CD8-positive, alpha-beta T cell (primary cell): ENCODE measurements at regions of chr14 and their contacts with region 1.

Region 1: DNA sequence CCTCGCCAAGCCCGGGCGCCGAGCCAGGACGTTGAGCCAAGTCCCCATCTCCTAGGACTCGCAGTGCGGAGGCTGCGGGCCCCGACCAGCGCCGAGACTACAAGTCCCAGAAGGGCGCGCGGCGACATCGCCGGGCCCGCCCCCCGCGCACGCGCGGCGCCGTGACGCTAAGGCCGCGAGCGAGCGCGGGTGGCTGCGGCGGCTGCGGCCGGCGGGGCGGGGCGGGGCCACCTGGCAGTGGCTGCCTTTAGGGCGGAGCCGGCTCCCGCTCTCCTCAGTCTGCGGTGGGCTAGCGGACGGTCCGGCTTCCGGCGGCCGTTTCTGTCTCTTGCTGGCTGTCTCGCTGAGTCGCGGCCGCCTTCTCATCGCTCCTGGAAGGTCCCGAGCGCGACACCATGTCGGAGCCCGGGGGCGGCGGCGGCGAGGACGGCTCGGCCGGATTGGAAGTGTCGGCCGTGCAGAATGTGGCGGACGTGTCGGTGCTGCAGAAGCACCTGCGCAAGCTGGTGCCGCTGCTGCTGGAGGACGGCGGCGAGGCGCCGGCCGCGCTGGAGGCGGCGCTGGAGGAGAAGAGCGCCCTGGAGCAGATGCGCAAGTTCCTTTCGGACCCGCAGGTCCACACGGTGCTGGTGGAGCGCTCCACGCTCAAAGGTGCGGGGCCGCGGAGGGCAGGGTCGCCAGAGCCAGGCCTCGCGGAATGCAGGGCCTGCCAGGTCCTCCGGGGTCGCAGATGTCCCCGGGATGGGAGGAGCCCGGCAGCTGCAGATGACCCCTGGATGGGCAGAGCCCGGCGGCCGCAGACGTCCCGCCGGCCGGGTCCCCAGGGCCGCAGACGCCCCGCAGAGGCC is at the start of gene DYNC1H1:
- DNase-seq: peak; percentile 75 to 94 (median 87)
- ATAC-seq: peak; percentile 84
- H3K4me3 ChIP-seq: peak within 1 kb of the TSS; percentile 87 to 92
- H3K4me3 Mint-ChIP-seq: peak within 1 kb of the TSS; percentile 90
- H3K27ac ChIP-seq: peak within 1 kb of the TSS; percentile 74 to 88
- H3K27ac Mint-ChIP-seq: peak within 1 kb of the TSS; percentile 91
- H3K4me1 ChIP-seq: peaks cover 31% of the 10 kb centered on the region
- H3K4me1 Mint-ChIP-seq: peaks cover 45% of the 10 kb centered on the region
- H3K27me3 ChIP-seq: no peaks in the 10 kb centered on the region
- H3K27me3 Mint-ChIP-seq: no peaks in the 10 kb centered on the region
- CTCF ChIP-seq: no peak
- total RNA-seq, gene DYNC1H1: 359 TPM

Region 2: GRCh38 chr14:101731187-101732080 is 233.1 kb before region 1 on chr14:
- CTCF ChIA-PET with region 1: no interaction called
- POLR2A ChIA-PET with region 1: no interaction called
- intact Hi-C with region 1: no loop called
- DNase-seq: peak; percentile 50 to 96 (median 80)
- ATAC-seq: peak; percentile 87
- H3K4me3 ChIP-seq: peak overlapping the region; percentile 24 to 28
- H3K4me3 Mint-ChIP-seq: peak overlapping the region; percentile 76
- H3K27ac ChIP-seq: peak overlapping the region; percentile 76 to 83
- H3K27ac Mint-ChIP-seq: peak overlapping the region; percentile 97
- H3K4me1 ChIP-seq: peaks cover 23% of the 10 kb centered on the region
- H3K4me1 Mint-ChIP-seq: peaks cover 44% of the 10 kb centered on the region
- H3K27me3 ChIP-seq: no peaks in the 10 kb centered on the region
- H3K27me3 Mint-ChIP-seq: no peaks in the 10 kb centered on the region
- CTCF ChIP-seq: no peak

Region 3: GRCh38 chr14:101761032-101761880 is 203.3 kb before region 1 on chr14 and contains the start of gene PPP2R5C:
- CTCF ChIA-PET with region 1: interaction called, 3 read pairs
- POLR2A ChIA-PET with region 1: interaction called, 3 read pairs
- intact Hi-C with region 1: loop called (anchors 1 to 5 kb)
- DNase-seq: peak; percentile 74 to 94 (median 87)
- ATAC-seq: peak; percentile 61
- H3K4me3 ChIP-seq: peak within 1 kb of the TSS; percentile 97 to 98
- H3K4me3 Mint-ChIP-seq: peak within 1 kb of the TSS; percentile 95
- H3K27ac ChIP-seq: peak within 1 kb of the TSS; percentile 90 to 93
- H3K27ac Mint-ChIP-seq: peak within 1 kb of the TSS; percentile 94
- H3K4me1 ChIP-seq: peaks cover 25% of the 10 kb centered on the region
- H3K4me1 Mint-ChIP-seq: peaks cover 41% of the 10 kb centered on the region
- H3K27me3 ChIP-seq: no peaks in the 10 kb centered on the region
- H3K27me3 Mint-ChIP-seq: no peaks in the 10 kb centered on the region
- CTCF ChIP-seq: no peak
- total RNA-seq, gene PPP2R5C: 557 to 560 TPM

Region 4: DNA sequence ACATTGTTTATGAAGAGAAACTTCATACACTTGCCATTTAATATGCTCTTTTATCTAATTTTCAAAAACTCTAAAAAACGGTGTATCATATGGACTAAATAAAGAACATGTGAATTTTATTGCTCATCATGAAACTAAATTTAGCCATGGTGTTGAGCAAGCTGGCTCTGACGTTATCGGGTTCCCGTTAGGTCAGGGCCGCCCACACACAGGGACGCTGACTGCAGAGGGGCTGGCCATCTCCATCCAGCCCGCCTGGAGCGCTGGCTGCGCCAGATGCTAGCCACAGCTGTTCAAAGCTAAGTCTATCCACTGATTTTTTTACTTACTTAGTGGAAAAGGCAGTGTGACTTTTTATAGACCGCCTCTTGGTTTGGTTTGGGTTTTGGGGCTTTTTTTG is 36.7 kb before region 1 on chr14:
- CTCF ChIA-PET with region 1: no interaction called
- POLR2A ChIA-PET with region 1: no interaction called
- intact Hi-C with region 1: no loop called
- DNase-seq: no peak
- ATAC-seq: no peak
- H3K4me3 ChIP-seq: no peak overlapping the region
- H3K4me3 Mint-ChIP-seq: no peak overlapping the region
- H3K27ac ChIP-seq: no peak overlapping the region
- H3K27ac Mint-ChIP-seq: no peak overlapping the region
- H3K4me1 ChIP-seq: no peaks in the 10 kb centered on the region
- H3K4me1 Mint-ChIP-seq: no peaks in the 10 kb centered on the region
- H3K27me3 ChIP-seq: no peaks in the 10 kb centered on the region
- H3K27me3 Mint-ChIP-seq: no peaks in the 10 kb centered on the region
- CTCF ChIP-seq: no peak

Region 5: DNA sequence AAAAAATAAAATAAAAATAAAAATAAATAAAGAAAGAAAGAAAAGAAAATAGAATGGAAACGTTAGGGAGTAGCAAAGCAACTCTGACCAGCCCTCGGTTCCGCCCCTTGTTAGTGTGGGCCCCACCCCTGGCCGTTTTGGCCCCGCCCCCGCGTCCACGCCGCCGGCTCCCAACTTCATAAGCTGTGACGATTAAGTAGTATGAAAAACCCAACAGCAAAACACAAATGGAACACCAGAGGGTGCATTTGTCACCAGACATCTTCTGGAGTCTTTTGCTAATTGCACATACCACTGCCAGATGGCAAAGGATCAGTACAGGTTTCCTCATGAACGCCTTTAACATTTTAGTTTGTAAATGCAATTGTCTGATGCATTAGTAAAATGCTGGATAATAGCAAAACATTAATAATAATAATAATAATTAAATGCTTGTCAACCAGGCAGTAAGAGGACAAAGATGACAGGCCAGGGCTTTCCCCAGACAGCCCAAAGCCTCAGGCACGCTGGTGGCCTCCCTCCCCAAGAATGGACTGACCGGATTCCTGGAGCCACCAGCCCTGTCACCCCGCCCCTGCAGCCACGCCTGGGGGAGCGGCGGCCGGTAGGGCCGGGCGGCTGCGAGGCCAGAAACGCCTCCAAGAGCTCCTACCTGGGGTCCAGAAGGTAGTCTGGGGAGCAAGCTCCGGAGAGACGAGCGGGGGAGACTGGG is 98.7 kb after region 1 on chr14:
- CTCF ChIA-PET with region 1: no interaction called
- POLR2A ChIA-PET with region 1: no interaction called
- intact Hi-C with region 1: loop called in 1 of 2 experiments (anchors 1 kb)
- DNase-seq: peak; percentile 45 to 86 (median 66)
- ATAC-seq: peak; percentile 95
- H3K4me3 ChIP-seq: no peak overlapping the region
- H3K4me3 Mint-ChIP-seq: no peak overlapping the region
- H3K27ac ChIP-seq: no peak overlapping the region
- H3K27ac Mint-ChIP-seq: no peak overlapping the region
- H3K4me1 ChIP-seq: no peaks in the 10 kb centered on the region
- H3K4me1 Mint-ChIP-seq: peaks cover 12% of the 10 kb centered on the region
- H3K27me3 ChIP-seq: no peaks in the 10 kb centered on the region
- H3K27me3 Mint-ChIP-seq: no peaks in the 10 kb centered on the region
- CTCF ChIP-seq: peak; percentile 32

Region 6: DNA sequence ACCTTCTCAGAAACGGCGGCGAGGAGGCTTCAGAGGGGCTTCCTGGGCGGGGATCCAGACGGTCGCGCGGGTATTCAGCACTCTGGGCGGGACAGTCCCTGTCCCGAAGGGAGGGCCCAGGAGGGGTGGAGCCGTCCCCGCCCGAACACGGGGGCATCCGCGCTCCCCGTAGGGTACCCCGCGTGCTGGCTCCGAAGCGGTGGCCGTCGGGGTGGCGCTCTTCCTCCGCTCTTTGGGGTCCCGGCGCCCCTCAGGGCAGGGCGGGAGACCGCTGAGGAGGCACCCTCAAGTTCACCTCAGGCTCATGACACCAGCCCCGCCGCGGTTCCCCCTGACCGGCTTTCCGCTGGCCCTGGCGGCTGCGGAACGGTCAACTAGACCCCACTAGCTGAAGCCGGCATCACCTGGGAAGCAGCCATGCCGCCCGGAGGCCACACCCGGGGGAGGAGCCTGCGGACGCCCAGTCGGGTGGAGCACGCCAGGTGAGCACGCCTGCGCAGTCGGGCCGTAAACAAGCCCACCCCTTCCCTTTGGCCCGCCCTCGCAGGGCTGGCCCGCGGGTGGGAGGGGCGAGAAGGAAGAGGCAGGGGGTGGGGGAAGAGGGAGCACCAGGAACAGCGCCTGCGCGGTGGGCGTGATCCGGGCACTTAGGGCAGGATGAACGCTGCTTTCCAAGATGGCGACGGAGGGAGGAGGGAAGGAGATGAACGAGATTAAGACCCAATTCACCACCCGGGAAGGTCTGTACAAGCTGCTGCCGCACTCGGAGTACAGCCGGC is 174.9 kb after region 1 on chr14 and contains the start of gene WDR20:
- CTCF ChIA-PET with region 1: no interaction called
- POLR2A ChIA-PET with region 1: no interaction called
- intact Hi-C with region 1: loop called (anchors 1 kb)
- DNase-seq: peak; percentile 98 to 100 (median 99)
- ATAC-seq: peak; percentile 96
- H3K4me3 ChIP-seq: peak within 1 kb of the TSS; percentile 94 to 95
- H3K4me3 Mint-ChIP-seq: peak within 1 kb of the TSS; percentile 99
- H3K27ac ChIP-seq: peak within 1 kb of the TSS; percentile 87 to 91
- H3K27ac Mint-ChIP-seq: peak within 1 kb of the TSS; percentile 98
- H3K4me1 ChIP-seq: peaks cover 25% of the 10 kb centered on the region
- H3K4me1 Mint-ChIP-seq: peaks cover 29% of the 10 kb centered on the region
- H3K27me3 ChIP-seq: no peaks in the 10 kb centered on the region
- H3K27me3 Mint-ChIP-seq: no peaks in the 10 kb centered on the region
- CTCF ChIP-seq: no peak
- total RNA-seq, gene WDR20: 40.8 to 46.3 TPM

Region 7: GRCh38 chr14:102323102-102323501 is 358.6 kb after region 1 on chr14:
- CTCF ChIA-PET with region 1: no interaction called
- POLR2A ChIA-PET with region 1: interaction called, 4 read pairs
- intact Hi-C with region 1: loop called in 1 of 2 experiments (anchors 1 kb)
- DNase-seq: peak in 3 of 9 experiments; percentile 22 to 61 (median 49)
- ATAC-seq: no peak
- H3K4me3 ChIP-seq: no peak overlapping the region
- H3K4me3 Mint-ChIP-seq: no peak overlapping the region
- H3K27ac ChIP-seq: no peak overlapping the region
- H3K27ac Mint-ChIP-seq: peak overlapping the region; percentile 35
- H3K4me1 ChIP-seq: peaks cover 19% of the 10 kb centered on the region
- H3K4me1 Mint-ChIP-seq: peaks cover 38% of the 10 kb centered on the region
- H3K27me3 ChIP-seq: no peaks in the 10 kb centered on the region
- H3K27me3 Mint-ChIP-seq: no peaks in the 10 kb centered on the region
- CTCF ChIP-seq: no peak

Region 8: GRCh38 chr14:102516531-102517415 is 552.3 kb after region 1 on chr14:
- CTCF ChIA-PET with region 1: no interaction called
- POLR2A ChIA-PET with region 1: no interaction called
- intact Hi-C with region 1: loop called in 1 of 2 experiments (anchors 2 kb)
- DNase-seq: peak; percentile 33 to 81 (median 60)
- ATAC-seq: peak; percentile 93
- H3K4me3 ChIP-seq: peak overlapping the region; percentile 51
- H3K4me3 Mint-ChIP-seq: peak overlapping the region; percentile 83
- H3K27ac ChIP-seq: no peak overlapping the region
- H3K27ac Mint-ChIP-seq: no peak overlapping the region
- H3K4me1 ChIP-seq: peaks cover 5% of the 10 kb centered on the region
- H3K4me1 Mint-ChIP-seq: peaks cover 5% of the 10 kb centered on the region
- H3K27me3 ChIP-seq: peaks cover 0 to 3% of the 10 kb centered on the region in 2 experiments
- H3K27me3 Mint-ChIP-seq: peaks cover 4% of the 10 kb centered on the region
- CTCF ChIP-seq: peak; percentile 85